CD4-positive, alpha-beta memory T cell (primary cell): ENCODE measurements at regions of chr1 and their contacts with region 1.

Region 1: GRCh38 chr1:114757455-114758250 is at the start of gene CSDE1:
- DNase-seq: peak; percentile 96 to 98 (median 97)
- H3K4me3 ChIP-seq: peak within 1 kb of the TSS; percentile 97 to 99
- H3K4me3 Mint-ChIP-seq: peak within 1 kb of the TSS; percentile 97 to 100 (median 100)
- H3K27ac ChIP-seq: peak within 1 kb of the TSS; percentile 100
- H3K27ac Mint-ChIP-seq: peak within 1 kb of the TSS; percentile 100
- H3K4me1 ChIP-seq: peaks cover 52% of the 10 kb centered on the region
- H3K4me1 Mint-ChIP-seq: peaks cover 43 to 62% (median 49%) of the 10 kb centered on the region in 4 donors
- H3K27me3 ChIP-seq: no peaks in the 10 kb centered on the region
- H3K27me3 Mint-ChIP-seq: no peaks in the 10 kb centered on the region
- total RNA-seq, gene CSDE1: 530 to 559 TPM

Region 2: DNA sequence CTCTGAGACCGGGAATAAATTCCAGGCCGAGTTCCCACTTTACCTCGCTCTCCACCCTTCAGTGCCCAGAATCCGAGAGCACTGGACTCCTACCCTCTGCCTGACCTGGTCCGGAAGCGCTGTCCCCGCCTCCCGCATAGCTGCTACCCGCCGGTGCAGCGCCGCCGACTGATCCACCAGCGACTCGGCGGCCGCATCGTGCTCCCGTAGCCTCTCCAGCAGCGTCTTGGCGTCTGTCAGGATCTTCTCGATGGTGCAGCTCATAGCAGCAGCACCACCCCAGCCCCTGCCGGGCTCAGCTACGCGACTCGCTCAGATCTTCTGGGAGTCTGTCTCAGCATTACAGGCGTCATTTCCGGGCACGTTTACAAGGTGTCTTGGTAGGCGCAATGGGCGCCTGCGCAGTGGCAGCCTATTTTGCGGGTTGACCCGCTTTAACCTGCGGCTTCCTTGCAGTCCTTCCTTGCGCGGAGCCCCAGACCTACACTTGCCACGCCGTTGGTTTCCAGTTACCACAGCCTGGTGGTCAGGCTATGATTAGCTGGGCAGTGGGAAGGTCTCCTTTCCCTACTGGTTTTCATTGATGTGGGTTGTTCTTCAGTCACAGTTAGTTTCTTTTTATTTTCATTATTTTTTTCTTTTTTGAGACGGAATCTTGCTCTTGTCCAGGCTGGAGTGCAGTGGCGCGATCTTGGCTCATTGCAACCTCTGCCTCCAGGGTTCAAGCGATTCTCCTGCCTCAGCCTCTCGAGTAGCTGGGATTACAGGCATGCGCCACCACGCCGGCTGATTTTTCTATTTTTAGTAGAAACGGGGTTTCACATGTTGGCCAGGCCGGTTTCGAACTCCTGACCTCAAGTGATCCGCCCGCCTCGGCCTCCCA is 22.9 kb after region 1 on chr1 and contains the start of gene SIKE1:
- CTCF ChIA-PET with region 1: interaction called, 3 read pairs
- POLR2A ChIA-PET with region 1: interaction called, 45 read pairs
- intact Hi-C with region 1: loop called (anchors 1 kb)
- DNase-seq: peak; percentile 93 to 98 (median 96)
- H3K4me3 ChIP-seq: peak within 1 kb of the TSS; percentile 77 to 83
- H3K4me3 Mint-ChIP-seq: peak within 1 kb of the TSS; percentile 95 to 100 (median 100)
- H3K27ac ChIP-seq: peak within 1 kb of the TSS; percentile 97
- H3K27ac Mint-ChIP-seq: peak within 1 kb of the TSS; percentile 93 to 100 (median 100)
- H3K4me1 ChIP-seq: peaks cover 18% of the 10 kb centered on the region
- H3K4me1 Mint-ChIP-seq: peaks cover 14 to 36% (median 26%) of the 10 kb centered on the region in 4 donors
- H3K27me3 ChIP-seq: no peaks in the 10 kb centered on the region
- H3K27me3 Mint-ChIP-seq: no peaks in the 10 kb centered on the region
- total RNA-seq, gene SIKE1: 66.6 to 67.1 TPM

Region 3: DNA sequence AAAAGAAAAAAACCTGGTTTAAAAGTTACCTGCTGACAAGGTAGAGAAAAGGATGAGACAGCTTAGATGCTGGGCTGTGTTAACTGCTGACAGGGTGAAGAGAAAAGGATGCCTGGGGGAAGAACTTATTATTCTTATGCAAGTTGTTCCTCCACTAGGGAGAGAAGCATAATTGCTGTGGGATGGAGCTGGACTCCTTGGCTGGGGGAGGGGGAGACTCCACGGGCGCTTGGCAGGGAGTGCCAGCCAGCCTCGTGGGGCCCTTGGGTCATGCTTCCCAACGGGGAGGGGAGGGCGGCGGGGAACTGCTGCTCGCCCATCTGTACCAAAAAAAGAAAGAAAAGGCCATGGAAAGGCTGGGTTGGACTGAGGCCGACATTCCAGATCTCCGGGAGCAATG is 144.2 kb after region 1 on chr1:
- CTCF ChIA-PET with region 1: no interaction called
- POLR2A ChIA-PET with region 1: no interaction called
- intact Hi-C with region 1: no loop called
- DNase-seq: no peak
- H3K4me3 ChIP-seq: no peak overlapping the region
- H3K4me3 Mint-ChIP-seq: no peak overlapping the region
- H3K27ac ChIP-seq: no peak overlapping the region
- H3K27ac Mint-ChIP-seq: no peak overlapping the region
- H3K4me1 ChIP-seq: no peaks in the 10 kb centered on the region
- H3K4me1 Mint-ChIP-seq: no peaks in the 10 kb centered on the region
- H3K27me3 ChIP-seq: peaks cover 1% of the 10 kb centered on the region
- H3K27me3 Mint-ChIP-seq: peaks cover 5 to 8% of the 10 kb centered on the region in 2 donors

Region 4: DNA sequence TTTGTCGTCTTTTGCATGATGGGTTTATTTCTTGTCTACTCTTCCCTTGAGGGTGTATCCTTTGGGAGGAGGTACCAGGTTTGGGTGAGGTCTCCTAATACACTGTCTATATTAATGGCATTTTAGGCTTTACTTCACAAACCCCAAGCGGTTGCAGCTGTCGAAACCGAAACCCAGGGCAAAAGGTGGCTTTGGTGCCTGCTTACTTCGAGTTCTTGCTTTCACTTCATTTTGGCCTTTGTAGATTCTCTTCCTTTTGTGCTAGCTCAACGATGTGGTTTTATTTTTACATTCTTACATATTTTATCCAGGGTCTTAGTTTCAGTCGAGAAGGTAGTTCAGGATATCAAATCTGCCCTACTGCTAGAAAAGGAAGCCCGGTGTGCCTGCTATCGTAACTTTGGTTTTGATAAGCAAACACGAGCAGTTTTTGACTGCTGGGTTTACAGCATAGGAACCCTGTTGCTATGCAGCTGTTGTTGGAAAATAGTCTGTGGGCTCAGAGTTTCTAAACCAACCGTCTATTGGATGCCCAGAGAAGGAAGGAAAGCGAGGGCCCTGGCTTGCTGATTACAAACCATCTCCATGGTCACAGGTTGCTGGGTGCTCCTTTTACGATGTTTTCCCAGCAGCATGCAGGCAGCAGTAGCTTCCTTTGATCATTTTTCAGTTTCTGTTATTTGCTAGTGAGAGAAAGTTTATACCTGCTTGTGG is 341.5 kb after region 1 on chr1:
- CTCF ChIA-PET with region 1: no interaction called
- POLR2A ChIA-PET with region 1: interaction called, 7 read pairs
- intact Hi-C with region 1: loop called (anchors 10 kb)
- DNase-seq: peak; percentile 88 to 96 (median 94)
- H3K4me3 ChIP-seq: peak overlapping the region; percentile 38 to 58
- H3K4me3 Mint-ChIP-seq: peak overlapping the region; percentile 87 to 99 (median 95)
- H3K27ac ChIP-seq: peak overlapping the region; percentile 89
- H3K27ac Mint-ChIP-seq: peak overlapping the region; percentile 94 to 100 (median 100)
- H3K4me1 ChIP-seq: peaks cover 40% of the 10 kb centered on the region
- H3K4me1 Mint-ChIP-seq: peaks cover 45 to 64% (median 53%) of the 10 kb centered on the region in 4 donors
- H3K27me3 ChIP-seq: no peaks in the 10 kb centered on the region
- H3K27me3 Mint-ChIP-seq: no peaks in the 10 kb centered on the region